Right ventricle myocardium inferior (tissue), 1 donor: ENCODE measurements at regions of chr6 and their contacts with region 1.

Region 1: DNA sequence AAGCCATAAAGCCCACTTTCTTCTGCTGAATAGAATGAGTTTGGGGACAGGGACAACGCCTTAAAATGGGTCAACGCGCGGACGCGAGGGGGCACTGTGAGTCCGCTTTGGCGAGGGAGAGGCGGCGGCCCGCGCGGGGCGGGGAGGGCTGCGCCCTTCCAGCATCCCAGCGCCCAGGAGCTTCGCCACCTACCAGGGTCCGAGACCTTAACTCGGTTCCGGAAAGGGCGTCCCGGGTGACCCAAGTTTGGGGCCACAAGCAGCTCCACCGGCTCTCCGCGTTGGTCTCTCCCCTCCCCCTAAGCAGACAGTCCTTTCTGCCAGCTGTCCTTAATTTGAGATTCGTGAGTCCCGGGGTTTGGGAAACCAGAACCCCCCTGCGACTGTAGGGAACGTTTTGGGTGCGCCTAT is 1.8 kb upstream of the SAMD5 start:
- DNase-seq: peak; percentile 77
- ATAC-seq: peak; percentile 69

Region 2: GRCh38 chr6:147614501-147614900 is 107.8 kb after region 1 on chr6:
- intact Hi-C with region 1: loop called (anchors 5 kb)
- DNase-seq: no peak
- ATAC-seq: no peak

Region 3: GRCh38 chr6:147651249-147652063 is 144.7 kb after region 1 on chr6:
- intact Hi-C with region 1: loop called (anchors 1 kb)
- DNase-seq: no peak
- ATAC-seq: peak; percentile 92